Mammary epithelial cell (primary cell): ENCODE measurements at regions of chr16 and their contacts with region 1.

Region 1: DNA sequence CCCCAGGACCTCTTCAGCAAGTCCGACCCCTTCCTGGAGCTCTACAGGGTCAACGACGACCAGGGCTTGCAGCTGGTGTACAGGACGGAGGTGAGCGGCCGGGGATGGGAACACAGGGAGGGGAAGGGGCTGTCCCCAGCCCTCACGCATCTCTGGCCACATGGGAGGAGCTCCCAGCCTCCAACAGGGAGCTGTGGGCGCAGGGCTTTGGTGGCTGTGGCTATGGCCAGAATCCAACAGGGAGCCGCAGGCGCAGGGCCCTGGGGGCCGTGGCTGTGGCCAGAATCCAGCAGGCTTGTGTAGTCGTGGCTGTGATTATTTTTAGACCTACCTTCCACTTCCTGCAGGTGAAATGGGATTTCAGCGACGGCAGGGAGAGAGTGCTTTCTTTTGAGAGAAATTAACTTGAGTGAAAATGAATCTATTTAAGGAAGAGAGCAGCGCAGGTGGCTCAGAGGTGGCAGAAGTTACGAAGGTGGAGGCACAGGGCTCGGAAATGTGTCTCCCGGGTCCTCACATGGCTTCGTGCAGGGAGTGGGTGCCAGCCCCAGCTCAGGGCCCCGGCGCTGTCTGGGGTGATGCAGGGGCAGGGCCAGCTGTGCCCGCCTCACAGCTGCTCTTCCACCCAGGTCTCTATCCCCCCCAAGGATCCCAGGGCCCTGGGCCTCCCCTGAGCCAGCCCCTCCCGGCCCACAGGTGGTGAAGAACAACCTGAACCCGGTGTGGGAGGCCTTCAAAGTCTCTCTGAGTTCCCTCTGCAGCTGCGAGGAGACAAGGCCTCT is 9.4 kb downstream of the CPNE7 start:
- DNase-seq: no peak
- H3K4me3 ChIP-seq: no peak overlapping the region
- H3K27ac ChIP-seq: no peak overlapping the region
- H3K4me1 ChIP-seq: peaks cover 20% of the 10 kb centered on the region
- H3K27me3 ChIP-seq: no peaks in the 10 kb centered on the region
- CTCF ChIP-seq: no peak

Region 2: GRCh38 chr16:89476804-89477261 is 108.1 kb before region 1 on chr16:
- CTCF ChIA-PET with region 1: no interaction called
- dilution Hi-C with region 1: no loop called
- in situ Hi-C with region 1: no loop called
- intact Hi-C with region 1: no loop called
- DNase-seq: no peak
- H3K4me3 ChIP-seq: peak overlapping the region in 1 of 3 experiments; percentile 27
- H3K27ac ChIP-seq: peak overlapping the region; percentile 93
- H3K4me1 ChIP-seq: peaks cover 86% of the 10 kb centered on the region
- H3K27me3 ChIP-seq: no peaks in the 10 kb centered on the region
- CTCF ChIP-seq: no peak

Region 3: DNA sequence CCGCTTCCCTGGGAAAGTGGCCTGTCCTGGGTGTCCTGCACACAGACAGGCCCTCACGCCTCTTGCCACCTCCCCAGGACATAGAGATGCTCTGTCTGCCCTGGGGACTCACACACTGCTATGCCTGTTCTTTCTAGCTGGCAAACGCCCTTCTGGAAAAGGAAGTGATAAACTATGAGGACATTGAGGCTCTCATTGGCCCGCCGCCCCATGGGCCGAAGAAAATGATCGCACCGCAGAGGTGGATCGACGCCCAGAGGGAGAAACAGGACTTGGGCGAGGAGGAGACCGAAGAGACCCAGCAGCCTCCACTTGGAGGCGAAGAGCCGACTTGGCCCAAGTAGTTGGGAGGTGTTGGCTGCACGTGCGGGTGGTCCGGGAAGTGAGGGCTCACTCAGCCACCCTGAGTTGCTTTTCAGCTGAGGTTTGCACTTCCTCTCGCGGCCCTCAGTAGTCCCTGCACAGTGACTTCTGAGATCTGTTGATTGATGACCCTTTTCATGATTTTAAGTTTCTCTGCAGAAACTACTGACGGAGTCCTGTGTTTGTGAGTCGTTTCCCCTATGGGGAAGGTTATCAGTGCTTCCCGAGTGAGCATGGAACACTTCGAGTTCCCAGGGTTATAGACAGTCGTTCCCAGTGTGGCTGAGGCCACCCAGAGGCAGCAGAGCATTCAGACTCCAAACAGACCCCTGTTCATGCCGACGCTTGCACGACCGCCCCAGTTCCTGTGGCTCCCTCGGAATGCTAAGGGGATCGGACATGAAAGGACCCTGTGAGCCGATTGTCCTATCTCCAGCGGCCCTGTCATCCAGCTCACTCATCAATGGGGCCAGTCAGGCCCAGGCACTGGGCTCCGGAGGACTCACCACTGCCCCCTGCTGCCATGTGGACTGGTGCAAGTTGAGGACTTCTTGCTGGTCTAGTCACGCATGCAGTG is 27.9 kb before region 1 on chr16:
- CTCF ChIA-PET with region 1: no interaction called
- dilution Hi-C with region 1: no loop called
- in situ Hi-C with region 1: no loop called
- intact Hi-C with region 1: no loop called
- DNase-seq: peak; percentile 56
- H3K4me3 ChIP-seq: no peak overlapping the region
- H3K27ac ChIP-seq: no peak overlapping the region
- H3K4me1 ChIP-seq: peaks cover 10% of the 10 kb centered on the region
- H3K27me3 ChIP-seq: no peaks in the 10 kb centered on the region
- CTCF ChIP-seq: peak; percentile 79 to 90

Region 4: DNA sequence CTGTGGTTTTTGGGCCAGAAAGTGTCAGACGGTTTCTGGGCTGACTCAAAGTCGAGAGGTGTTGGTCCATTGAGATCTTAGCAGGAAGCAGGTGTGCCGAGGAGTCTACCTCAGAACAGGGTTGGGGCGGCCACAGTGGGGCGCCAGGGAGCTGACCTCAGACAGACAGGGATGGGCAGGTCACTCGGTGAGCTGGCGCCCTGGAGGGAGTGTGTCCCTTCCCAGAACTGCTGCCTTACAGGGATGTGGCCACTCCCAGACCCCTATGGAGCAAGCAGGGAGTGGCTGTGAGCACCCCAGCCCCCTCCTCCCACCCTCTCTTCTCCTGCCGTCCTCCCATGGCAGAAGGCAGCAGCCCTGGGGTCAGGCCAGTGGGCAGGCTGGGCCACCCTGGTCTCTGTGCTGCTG is 14.5 kb after region 1 on chr16:
- CTCF ChIA-PET with region 1: interaction called, 23 read pairs
- dilution Hi-C with region 1: no loop called
- in situ Hi-C with region 1: no loop called
- intact Hi-C with region 1: no loop called
- DNase-seq: peak; percentile 41
- H3K4me3 ChIP-seq: no peak overlapping the region
- H3K27ac ChIP-seq: no peak overlapping the region
- H3K4me1 ChIP-seq: peaks cover 36% of the 10 kb centered on the region
- H3K27me3 ChIP-seq: no peaks in the 10 kb centered on the region
- CTCF ChIP-seq: peak; percentile 50 to 64

Region 5: DNA sequence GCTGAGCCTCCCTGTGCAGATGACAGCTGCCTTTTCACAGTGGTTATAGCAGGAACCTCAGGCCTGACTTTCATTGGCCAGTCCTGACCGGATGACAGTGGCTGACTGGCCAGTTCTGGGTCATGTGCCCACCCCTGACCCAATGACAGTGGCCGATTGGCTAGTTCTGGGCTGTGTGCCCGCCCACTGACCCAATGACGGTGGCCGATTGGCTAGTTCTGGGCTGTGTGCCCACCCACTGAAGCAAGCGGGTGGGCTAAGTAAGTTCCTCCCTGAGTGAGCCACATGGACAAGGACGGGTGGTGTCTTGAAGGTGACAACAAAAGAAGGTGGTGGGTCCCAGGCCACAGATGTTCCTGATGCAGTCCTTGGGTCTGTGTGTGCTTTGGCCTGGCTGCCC is 373.1 kb after region 1 on chr16:
- CTCF ChIA-PET with region 1: no interaction called
- dilution Hi-C with region 1: no loop called
- in situ Hi-C with region 1: no loop called
- intact Hi-C with region 1: no loop called
- DNase-seq: no peak
- H3K4me3 ChIP-seq: no peak overlapping the region
- H3K27ac ChIP-seq: no peak overlapping the region
- H3K4me1 ChIP-seq: no peaks in the 10 kb centered on the region
- H3K27me3 ChIP-seq: no peaks in the 10 kb centered on the region
- CTCF ChIP-seq: no peak